CD4-positive, alpha-beta memory T cell (primary cell): ENCODE measurements at regions of chr11 and their contacts with region 1.

Region 1: DNA sequence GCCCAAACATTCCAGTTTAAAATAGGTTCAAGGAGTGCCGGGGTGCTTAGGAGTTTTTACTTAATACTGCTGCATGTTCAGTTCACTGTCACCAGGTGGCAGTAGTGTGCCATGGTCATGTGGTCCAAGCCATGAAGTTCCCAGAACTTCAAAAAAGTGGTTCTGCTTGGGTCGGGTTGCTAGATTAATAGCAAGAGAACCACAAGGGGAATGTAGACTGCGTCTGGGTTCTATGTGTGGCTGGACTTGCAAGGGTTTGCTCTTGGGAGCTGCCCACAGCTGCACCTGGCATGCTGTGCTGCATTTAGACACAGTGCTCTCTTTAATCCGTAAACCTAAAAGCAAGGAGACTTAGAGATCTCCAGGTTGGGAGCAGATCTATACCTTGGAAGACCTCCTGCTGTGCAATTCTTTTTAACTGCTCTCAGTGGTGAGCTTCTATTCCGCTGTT is 6.5 kb upstream of the SPON1 start:
- DNase-seq: peak; percentile 54 to 65 (median 57)
- H3K4me3 ChIP-seq: no peak overlapping the region
- H3K4me3 Mint-ChIP-seq: no peak overlapping the region
- H3K27ac ChIP-seq: no peak overlapping the region
- H3K27ac Mint-ChIP-seq: no peak overlapping the region
- H3K4me1 ChIP-seq: peaks cover 11% of the 10 kb centered on the region
- H3K4me1 Mint-ChIP-seq: peaks cover 0 to 3% (median 1%) of the 10 kb centered on the region in 4 donors
- H3K27me3 ChIP-seq: peaks cover 3% of the 10 kb centered on the region
- H3K27me3 Mint-ChIP-seq: peaks cover 8 to 11% of the 10 kb centered on the region in 2 donors

Region 2: GRCh38 chr11:13868710-13869397 is 87.1 kb before region 1 on chr11:
- CTCF ChIA-PET with region 1: interaction called, 18 read pairs
- POLR2A ChIA-PET with region 1: interaction called, 11 read pairs
- intact Hi-C with region 1: no loop called
- DNase-seq: peak; percentile 80 to 91 (median 84)
- H3K4me3 ChIP-seq: no peak overlapping the region
- H3K4me3 Mint-ChIP-seq: peak overlapping the region in 7 of 8 donors; percentile 1 to 56 (median 43)
- H3K27ac ChIP-seq: peak overlapping the region; percentile 55
- H3K27ac Mint-ChIP-seq: peak overlapping the region; percentile 77 to 97 (median 96)
- H3K4me1 ChIP-seq: peaks cover 32% of the 10 kb centered on the region
- H3K4me1 Mint-ChIP-seq: peaks cover 30 to 49% (median 35%) of the 10 kb centered on the region in 4 donors
- H3K27me3 ChIP-seq: no peaks in the 10 kb centered on the region
- H3K27me3 Mint-ChIP-seq: no peaks in the 10 kb centered on the region

Region 3: GRCh38 chr11:13942983-13943382 is 13.0 kb before region 1 on chr11:
- CTCF ChIA-PET with region 1: interaction called, 147 read pairs
- POLR2A ChIA-PET with region 1: interaction called, 10 read pairs
- intact Hi-C with region 1: no loop called
- DNase-seq: no peak
- H3K4me3 ChIP-seq: no peak overlapping the region
- H3K4me3 Mint-ChIP-seq: no peak overlapping the region
- H3K27ac ChIP-seq: no peak overlapping the region
- H3K27ac Mint-ChIP-seq: peak overlapping the region in 2 of 7 donors; percentile 9 to 32
- H3K4me1 ChIP-seq: peaks cover 56% of the 10 kb centered on the region
- H3K4me1 Mint-ChIP-seq: peaks cover 40 to 59% (median 48%) of the 10 kb centered on the region in 4 donors
- H3K27me3 ChIP-seq: no peaks in the 10 kb centered on the region
- H3K27me3 Mint-ChIP-seq: no peaks in the 10 kb centered on the region

Region 4: GRCh38 chr11:14148653-14149273 is 192.8 kb after region 1 on chr11:
- CTCF ChIA-PET with region 1: interaction called, 83 read pairs
- POLR2A ChIA-PET with region 1: interaction called, 7 read pairs
- intact Hi-C with region 1: loop called (anchors 1 kb)
- DNase-seq: peak in 4 of 5 donors; percentile 39 to 51 (median 42)
- H3K4me3 ChIP-seq: no peak overlapping the region
- H3K4me3 Mint-ChIP-seq: no peak overlapping the region
- H3K27ac ChIP-seq: no peak overlapping the region
- H3K27ac Mint-ChIP-seq: peak overlapping the region in 1 of 7 donors; percentile 10
- H3K4me1 ChIP-seq: no peaks in the 10 kb centered on the region
- H3K4me1 Mint-ChIP-seq: peaks cover 0 to 4% (median 1%) of the 10 kb centered on the region in 4 donors
- H3K27me3 ChIP-seq: no peaks in the 10 kb centered on the region
- H3K27me3 Mint-ChIP-seq: no peaks in the 10 kb centered on the region